K562 (cell line): ENCODE measurements at regions of chr11 and their contacts with region 1.

Region 1: DNA sequence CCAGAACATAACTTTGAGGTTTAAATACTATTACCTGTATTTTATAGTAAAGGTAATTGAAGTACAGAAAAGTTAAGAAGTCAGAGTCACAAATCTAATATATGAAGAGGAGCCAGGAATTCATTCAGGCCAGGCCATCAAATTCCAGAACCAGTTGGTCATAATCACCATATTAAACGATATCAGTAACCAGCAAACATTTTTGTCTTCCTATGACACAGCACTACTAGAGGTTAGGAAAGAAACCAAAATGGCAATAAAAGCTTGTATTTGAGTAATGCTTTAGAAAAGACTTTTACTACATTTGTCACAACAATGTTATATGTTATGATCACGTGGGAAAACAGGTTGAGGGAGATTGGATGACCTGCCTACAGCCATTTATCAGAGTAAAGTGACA is 62.2 kb downstream of the DKK3 start:
- DNase-seq: no peak
- ATAC-seq: no peak
- H3K4me3 ChIP-seq: no peak overlapping the region
- H3K27ac ChIP-seq: no peak overlapping the region
- H3K4me1 ChIP-seq: no peaks in the 10 kb centered on the region
- H3K27me3 ChIP-seq: no peaks in the 10 kb centered on the region
- CTCF ChIP-seq: no peak
- EP300 ChIP-seq: no peak
- POLR2A ChIP-seq: no peak
- RAD21 ChIP-seq: no peak

Region 2: DNA sequence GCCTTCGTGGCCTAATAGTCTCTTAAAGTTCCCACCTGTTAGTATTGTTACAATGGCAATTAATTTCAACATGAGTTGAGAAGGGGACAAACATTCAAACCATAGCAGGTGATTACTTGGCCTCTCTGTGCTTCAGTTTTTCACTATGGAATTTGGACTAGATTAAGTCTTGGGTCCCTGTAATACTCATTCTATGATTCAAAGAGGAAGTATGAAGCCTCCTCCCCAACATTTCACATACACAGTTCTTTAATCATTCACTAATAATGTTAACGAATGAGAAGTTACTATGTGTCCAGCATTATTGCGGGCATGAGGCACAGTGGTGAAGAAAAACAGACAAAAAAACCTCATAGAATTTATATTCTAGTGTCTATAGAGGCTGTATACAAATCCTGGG is 124.3 kb before region 1 on chr11:
- CTCF ChIA-PET with region 1: no interaction called
- POLR2A ChIA-PET with region 1: no interaction called
- in situ Hi-C with region 1: no loop called
- intact Hi-C with region 1: no loop called
- DNase-seq: no peak
- ATAC-seq: no peak
- H3K4me3 ChIP-seq: no peak overlapping the region
- H3K27ac ChIP-seq: no peak overlapping the region
- H3K4me1 ChIP-seq: no peaks in the 10 kb centered on the region
- H3K27me3 ChIP-seq: no peaks in the 10 kb centered on the region
- CTCF ChIP-seq: no peak
- EP300 ChIP-seq: no peak
- POLR2A ChIP-seq: no peak
- RAD21 ChIP-seq: no peak

Region 3: GRCh38 chr11:11960687-11961086 is 14.5 kb after region 1 on chr11:
- CTCF ChIA-PET with region 1: no interaction called
- POLR2A ChIA-PET with region 1: interaction called, 14 read pairs
- in situ Hi-C with region 1: no loop called
- intact Hi-C with region 1: no loop called
- DNase-seq: no peak
- ATAC-seq: no peak
- H3K4me3 ChIP-seq: no peak overlapping the region
- H3K27ac ChIP-seq: no peak overlapping the region
- H3K4me1 ChIP-seq: peaks cover 1 to 6% of the 10 kb centered on the region in 2 experiments; a peak in 3 of 5 replicates
- H3K27me3 ChIP-seq: peaks cover 9 to 23% of the 10 kb centered on the region in 2 experiments; a peak in 4 of 5 replicates
- CTCF ChIP-seq: no peak
- EP300 ChIP-seq: no peak
- POLR2A ChIP-seq: no peak
- RAD21 ChIP-seq: no peak

Region 4: GRCh38 chr11:11973361-11973800 is 27.2 kb after region 1 on chr11:
- CTCF ChIA-PET with region 1: no interaction called
- POLR2A ChIA-PET with region 1: no interaction called
- in situ Hi-C with region 1: no loop called
- intact Hi-C with region 1: no loop called
- DNase-seq: no peak
- ATAC-seq: no peak
- H3K4me3 ChIP-seq: no peak overlapping the region
- H3K27ac ChIP-seq: no peak overlapping the region
- H3K4me1 ChIP-seq: 0 out of 5 replicates have a peak, but pooled peaks cover 0 to 5% of the 10 kb centered on the region in 2 experiments
- H3K27me3 ChIP-seq: peaks cover 30 to 72% of the 10 kb centered on the region in 2 experiments; a peak in 3 of 5 replicates
- CTCF ChIP-seq: no peak
- EP300 ChIP-seq: no peak
- POLR2A ChIP-seq: no peak
- RAD21 ChIP-seq: no peak

Region 5: DNA sequence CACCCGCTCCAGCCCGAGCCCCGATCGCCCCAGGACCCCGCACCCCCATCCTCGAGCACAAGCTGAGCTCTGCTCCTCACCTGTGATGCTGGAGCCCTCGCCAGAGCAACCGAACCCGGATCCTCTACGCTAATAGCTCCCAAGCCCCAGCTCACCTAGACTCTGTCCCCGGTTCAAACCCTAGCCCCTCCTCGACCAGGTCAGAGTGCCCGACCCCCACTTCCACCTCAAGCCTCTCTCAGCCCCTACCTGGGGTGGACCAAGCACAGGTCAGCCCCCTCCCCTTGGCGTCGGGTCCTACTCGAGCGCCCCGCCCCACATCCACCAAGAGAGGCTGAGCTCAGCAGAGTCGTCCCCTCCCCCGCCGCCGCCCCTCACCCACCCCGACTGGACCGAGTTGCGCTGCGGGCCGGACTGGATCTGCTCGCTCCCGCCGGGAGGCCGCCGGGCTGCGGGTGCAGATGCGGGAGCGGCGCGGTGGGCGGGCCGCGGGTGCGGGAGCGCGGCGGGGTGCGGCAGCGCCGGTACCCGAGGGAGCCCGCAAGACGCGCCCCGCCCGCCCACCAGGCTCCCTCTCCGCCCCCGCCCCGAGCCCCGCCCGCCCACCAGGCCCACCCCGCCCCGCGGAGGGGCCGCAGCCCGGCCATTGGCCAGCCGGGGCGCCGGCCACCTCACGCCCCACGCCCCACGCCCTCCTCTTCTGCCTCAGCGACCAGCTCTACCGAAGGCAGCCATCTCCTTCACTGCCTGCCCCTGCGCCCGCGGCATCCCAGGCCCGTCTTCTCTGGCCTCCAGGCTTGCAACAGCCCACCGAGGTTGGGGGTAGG is 62.8 kb after region 1 on chr11:
- CTCF ChIA-PET with region 1: no interaction called
- POLR2A ChIA-PET with region 1: no interaction called
- in situ Hi-C with region 1: no loop called
- intact Hi-C with region 1: no loop called
- DNase-seq: peak; percentile 31 to 94 (median 82)
- ATAC-seq: peak; percentile 87
- H3K4me3 ChIP-seq: no peak overlapping the region
- H3K27ac ChIP-seq: no peak overlapping the region
- H3K4me1 ChIP-seq: peaks cover 0 to 14% of the 10 kb centered on the region in 2 experiments; a peak in 2 of 5 replicates
- H3K27me3 ChIP-seq: peaks cover 34 to 45% of the 10 kb centered on the region in 2 experiments; a peak in 4 of 5 replicates
- CTCF ChIP-seq: no peak
- EP300 ChIP-seq: no peak
- POLR2A ChIP-seq: no peak
- RAD21 ChIP-seq: no peak